Left lung (tissue), 14 donors: ENCODE measurements at regions of chr1 and their contacts with region 1.

Region 1: GRCh38 chr1:89632657-89633247 is at the start of gene LRRC8C:
- DNase-seq: peak; percentile 76 to 98 (median 86)
- ATAC-seq: peak; percentile 96
- H3K4me3 ChIP-seq: peak within 1 kb of the TSS; percentile 90 to 96
- H3K27ac ChIP-seq: peak within 1 kb of the TSS; percentile 87 to 91
- H3K4me1 ChIP-seq: peaks cover 5 to 52% of the 10 kb centered on the region in 2 donors
- H3K27me3 ChIP-seq: no peaks in the 10 kb centered on the region
- CTCF ChIP-seq: peak; percentile 40 to 56
- polyA plus RNA-seq, gene LRRC8C: 8.3 to 9.7 (median 9.0) TPM

Region 2: GRCh38 chr1:89545264-89546038 is 87.3 kb before region 1 on chr1:
- intact Hi-C with region 1: no loop called
- DNase-seq: no peak
- ATAC-seq: peak; percentile 39
- H3K4me3 ChIP-seq: no peak overlapping the region
- H3K27ac ChIP-seq: no peak overlapping the region
- H3K4me1 ChIP-seq: peaks cover 0 to 46% of the 10 kb centered on the region in 2 donors
- H3K27me3 ChIP-seq: no peaks in the 10 kb centered on the region
- CTCF ChIP-seq: no peak

Region 3: DNA sequence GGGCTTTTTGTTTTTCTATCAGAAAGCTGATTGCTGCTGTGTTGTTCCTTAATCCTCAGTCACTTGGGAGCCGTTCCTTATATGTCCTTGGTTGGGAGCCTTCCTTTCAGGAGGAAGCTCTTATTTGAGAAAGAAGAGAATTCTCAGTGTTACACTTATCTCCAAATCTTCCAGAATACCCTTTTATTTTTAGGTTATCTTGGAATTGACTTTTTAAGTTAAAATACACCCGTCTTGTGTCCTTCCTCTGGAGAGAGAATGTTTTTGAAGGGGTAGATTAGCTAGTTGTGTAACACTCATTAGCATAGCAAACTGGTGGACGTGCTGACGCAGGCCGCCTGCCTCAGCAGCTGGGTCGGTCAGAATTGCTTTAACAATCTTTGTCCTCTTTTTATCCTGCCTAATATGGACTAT is 66.0 kb before region 1 on chr1:
- intact Hi-C with region 1: no loop called
- DNase-seq: peak; percentile 53 to 81 (median 64)
- ATAC-seq: peak; percentile 95
- H3K4me3 ChIP-seq: no peak overlapping the region
- H3K27ac ChIP-seq: peak overlapping the region; percentile 40 to 50
- H3K4me1 ChIP-seq: peaks cover 0 to 17% of the 10 kb centered on the region in 2 donors
- H3K27me3 ChIP-seq: no peaks in the 10 kb centered on the region
- CTCF ChIP-seq: no peak

Region 4: DNA sequence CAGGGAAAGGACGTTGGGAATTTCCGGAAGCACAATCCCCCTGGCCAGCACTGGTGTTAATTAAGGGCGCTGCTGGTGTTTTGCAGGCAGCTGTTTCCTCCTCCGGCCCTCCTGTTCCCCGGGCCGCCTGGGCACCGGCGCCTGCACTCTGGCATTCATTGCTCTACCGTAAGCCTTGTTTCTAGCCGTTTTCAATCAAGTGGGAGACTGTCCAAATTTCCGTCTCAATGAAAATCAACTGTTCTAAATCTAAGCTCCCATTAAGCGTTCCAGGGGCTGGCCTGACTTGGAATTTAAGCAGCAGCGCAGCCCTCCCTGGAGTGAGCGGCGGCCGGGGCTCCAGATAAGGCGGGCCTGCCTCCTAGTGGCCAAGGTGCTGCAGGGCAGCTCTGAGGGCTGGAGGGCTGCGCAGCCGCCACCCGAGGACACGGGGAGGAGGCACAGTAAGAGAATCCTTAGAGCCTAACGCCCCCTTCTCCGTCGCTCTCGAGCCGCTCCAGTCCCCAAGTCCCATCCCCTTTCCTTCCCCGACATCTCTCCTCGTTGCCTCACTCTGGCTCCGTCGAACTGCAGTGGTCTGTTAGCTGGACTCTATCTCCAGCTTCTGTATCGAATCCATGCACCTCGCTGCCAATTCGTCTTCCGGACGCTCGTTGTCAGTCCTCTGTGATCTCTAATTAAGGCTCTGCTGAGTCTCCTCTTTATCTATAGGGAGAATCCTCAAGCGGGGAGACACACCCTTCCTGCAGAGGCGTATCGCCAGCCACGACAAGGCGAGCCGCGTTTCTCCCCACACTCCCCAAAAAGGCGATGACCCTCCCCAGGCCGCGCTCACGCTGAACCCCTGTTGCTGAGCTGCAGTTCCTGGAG is 130.3 kb after region 1 on chr1:
- intact Hi-C with region 1: loop called in 1 of 2 experiments (anchors 5 kb)
- DNase-seq: peak; percentile 82 to 98 (median 90)
- ATAC-seq: peak; percentile 100
- H3K4me3 ChIP-seq: peak overlapping the region; percentile 28 to 38
- H3K27ac ChIP-seq: peak overlapping the region; percentile 14 to 61
- H3K4me1 ChIP-seq: peaks cover 8 to 55% of the 10 kb centered on the region in 2 donors
- H3K27me3 ChIP-seq: no peaks in the 10 kb centered on the region
- CTCF ChIP-seq: peak; percentile 98 to 99